ENCODE measurements at regions of chr1 and their contacts with region 1.

Region 1: GRCh38 chr1:65209005-65209885 is 61.2 kb downstream of the AK4 start:
- DNase-seq: peak; percentile 23
- H3K4me3 Mint-ChIP-seq: no peak overlapping the region
- H3K27ac Mint-ChIP-seq: no peak overlapping the region
- H3K4me1 Mint-ChIP-seq: peaks cover 15% of the 10 kb centered on the region
- H3K27me3 Mint-ChIP-seq: no peaks in the 10 kb centered on the region

Region 2: DNA sequence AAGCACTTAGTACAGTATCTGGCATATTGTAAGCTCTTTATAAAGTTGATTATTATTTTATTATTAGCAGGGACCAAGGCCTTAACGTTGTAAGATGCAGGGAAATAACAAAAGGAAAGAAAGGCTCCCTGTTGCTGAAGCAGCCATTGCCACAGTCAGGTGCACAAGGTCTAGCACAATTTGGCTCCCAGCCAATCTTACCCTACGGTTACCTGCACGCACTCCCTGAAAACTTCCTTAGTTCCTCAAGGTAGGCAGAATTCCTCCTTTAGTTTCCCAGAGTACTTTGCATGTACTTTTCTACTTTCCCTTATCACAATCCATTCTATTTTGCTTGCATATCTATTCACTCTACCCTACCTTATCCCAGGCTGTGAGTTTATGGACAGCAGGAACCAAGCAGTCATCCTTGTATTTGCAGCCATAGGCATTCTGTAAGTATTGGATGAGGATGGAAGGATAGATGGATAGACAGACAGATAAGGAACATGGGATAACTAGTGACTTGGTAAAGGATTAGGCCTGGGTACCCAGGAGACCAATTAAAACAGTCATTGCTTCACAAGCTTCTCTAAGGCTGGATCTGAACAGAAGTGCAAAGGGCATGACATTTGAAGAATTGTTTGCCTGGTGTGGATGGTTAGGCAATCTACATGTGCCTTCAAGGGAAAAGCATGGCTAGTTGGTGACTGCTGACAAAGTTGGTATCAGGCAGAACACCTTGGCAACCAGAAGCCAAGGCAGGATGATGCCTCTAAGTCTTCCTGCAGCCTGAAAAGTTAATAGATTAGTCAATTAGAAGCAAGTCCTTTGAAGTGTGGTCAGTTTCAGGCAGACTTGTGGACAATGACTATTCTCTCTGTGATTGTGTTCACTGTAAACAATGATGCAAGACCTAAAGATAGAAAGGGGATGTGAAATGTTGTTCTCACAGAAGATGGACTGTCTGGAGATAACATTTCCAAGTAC is 222.1 kb before region 1 on chr1:
- CTCF ChIA-PET with region 1: no interaction called
- DNase-seq: no peak
- H3K4me3 Mint-ChIP-seq: no peak overlapping the region
- H3K27ac Mint-ChIP-seq: no peak overlapping the region
- H3K4me1 Mint-ChIP-seq: peaks cover 2% of the 10 kb centered on the region
- H3K27me3 Mint-ChIP-seq: no peaks in the 10 kb centered on the region

Region 3: GRCh38 chr1:65059930-65060538 is 149.2 kb before region 1 on chr1:
- CTCF ChIA-PET with region 1: interaction called, 16 read pairs
- DNase-seq: no peak
- H3K4me3 Mint-ChIP-seq: no peak overlapping the region
- H3K27ac Mint-ChIP-seq: no peak overlapping the region
- H3K4me1 Mint-ChIP-seq: peaks cover 15% of the 10 kb centered on the region
- H3K27me3 Mint-ChIP-seq: peaks cover 3% of the 10 kb centered on the region

Region 4: DNA sequence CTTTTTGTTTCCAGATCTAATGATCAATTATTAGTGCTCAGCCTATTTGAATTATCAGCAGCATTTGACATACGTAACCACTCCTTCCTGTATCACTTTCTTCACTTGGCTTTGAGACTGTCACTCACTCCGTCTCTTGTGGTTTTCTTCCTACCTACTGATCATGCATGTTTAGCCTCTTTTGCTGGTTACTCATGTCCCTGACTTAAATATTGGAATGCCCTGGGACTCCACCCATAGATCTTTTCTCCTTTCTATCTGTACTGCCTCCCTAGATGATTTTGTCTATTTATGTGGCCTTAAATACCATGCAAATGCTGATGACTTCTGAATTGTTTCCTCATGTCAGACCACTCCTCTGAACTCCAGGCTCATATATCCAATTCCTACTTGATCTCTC is 525.7 kb after region 1 on chr1:
- CTCF ChIA-PET with region 1: no interaction called
- DNase-seq: no peak
- H3K4me3 Mint-ChIP-seq: no peak overlapping the region
- H3K27ac Mint-ChIP-seq: no peak overlapping the region
- H3K4me1 Mint-ChIP-seq: no peaks in the 10 kb centered on the region
- H3K27me3 Mint-ChIP-seq: no peaks in the 10 kb centered on the region